ENCODE measurements at regions of chr6 and their contacts with region 1.

Region 1: GRCh38 chr6:148629592-148630465 is 117.0 kb upstream of the UST start:
- DNase-seq: peak in 1 of 3 donors; percentile 14
- H3K4me3 ChIP-seq: no peak overlapping the region
- H3K4me3 Mint-ChIP-seq: no peak overlapping the region
- H3K27ac ChIP-seq: no peak overlapping the region
- H3K27ac Mint-ChIP-seq: no peak overlapping the region
- H3K4me1 ChIP-seq: peaks cover 3 to 11% of the 10 kb centered on the region in 2 donors
- H3K4me1 Mint-ChIP-seq: peaks cover 12% of the 10 kb centered on the region
- H3K27me3 ChIP-seq: no peaks in the 10 kb centered on the region
- H3K27me3 Mint-ChIP-seq: peaks cover 1 to 6% (median 3%) of the 10 kb centered on the region in 3 donors
- CTCF ChIP-seq: no peak

Region 2: GRCh38 chr6:148682990-148683389 is 53.2 kb after region 1 on chr6:
- intact Hi-C with region 1: loop called in 1 of 2 experiments (anchors 10 kb)
- DNase-seq: peak; percentile 82 to 91 (median 87)
- H3K4me3 ChIP-seq: peak overlapping the region in 1 of 3 experiments; percentile 8
- H3K4me3 Mint-ChIP-seq: peak overlapping the region; percentile 63 to 71
- H3K27ac ChIP-seq: peak overlapping the region; percentile 63 to 70
- H3K27ac Mint-ChIP-seq: peak overlapping the region; percentile 88 to 96 (median 94)
- H3K4me1 ChIP-seq: peaks cover 38 to 49% of the 10 kb centered on the region in 2 donors
- H3K4me1 Mint-ChIP-seq: peaks cover 49% of the 10 kb centered on the region
- H3K27me3 ChIP-seq: no peaks in the 10 kb centered on the region
- H3K27me3 Mint-ChIP-seq: peaks cover 0 to 2% (median 0%) of the 10 kb centered on the region in 3 donors
- CTCF ChIP-seq: no peak